Naive thymus-derived CD4-positive, alpha-beta T cell (primary cell): ENCODE measurements at regions of chr1 and their contacts with region 1.

Region 1: GRCh38 chr1:61588736-61589672 is 135.9 kb downstream of the TM2D1 start:
- DNase-seq: peak in 8 of 9 donors; percentile 7 to 53 (median 46)
- ATAC-seq: peak; percentile 74
- H3K4me3 ChIP-seq: no peak overlapping the region
- H3K4me3 Mint-ChIP-seq: no peak overlapping the region
- H3K27ac ChIP-seq: no peak overlapping the region
- H3K27ac Mint-ChIP-seq: no peak overlapping the region
- H3K4me1 ChIP-seq: no peaks in the 10 kb centered on the region
- H3K4me1 Mint-ChIP-seq: peaks cover 0 to 3% (median 0%) of the 10 kb centered on the region in 7 donors
- H3K27me3 ChIP-seq: no peaks in the 10 kb centered on the region
- H3K27me3 Mint-ChIP-seq: peaks cover 0 to 10% (median 8%) of the 10 kb centered on the region in 5 donors

Region 2: DNA sequence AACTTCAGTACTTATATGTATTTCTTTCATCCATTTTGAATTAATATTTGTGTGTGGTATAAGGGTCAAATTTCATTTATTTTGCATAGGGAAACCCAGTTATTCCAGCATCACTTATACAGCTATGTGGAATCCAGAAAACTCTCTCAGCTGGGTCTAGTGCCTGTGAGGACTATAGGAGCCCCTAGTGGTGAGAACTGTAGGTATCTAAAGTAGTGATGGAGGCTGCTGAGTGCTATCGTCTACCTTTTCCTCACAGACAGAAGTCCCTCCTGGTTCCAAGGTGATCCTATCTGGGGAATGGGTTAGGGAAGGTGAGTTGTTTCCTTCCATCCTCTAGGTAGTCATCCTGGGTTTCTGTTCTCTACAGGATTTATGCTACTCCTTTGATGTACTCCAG is 1163.5 kb before region 1 on chr1:
- CTCF ChIA-PET with region 1: no interaction called
- POLR2A ChIA-PET with region 1: no interaction called
- intact Hi-C with region 1: no loop called
- DNase-seq: no peak
- ATAC-seq: no peak
- H3K4me3 ChIP-seq: no peak overlapping the region
- H3K4me3 Mint-ChIP-seq: no peak overlapping the region
- H3K27ac ChIP-seq: no peak overlapping the region
- H3K27ac Mint-ChIP-seq: no peak overlapping the region
- H3K4me1 ChIP-seq: no peaks in the 10 kb centered on the region
- H3K4me1 Mint-ChIP-seq: no peaks in the 10 kb centered on the region
- H3K27me3 ChIP-seq: no peaks in the 10 kb centered on the region
- H3K27me3 Mint-ChIP-seq: peaks cover 0 to 4% (median 0%) of the 10 kb centered on the region in 5 donors

Region 3: GRCh38 chr1:60969971-60970509 is 619.0 kb before region 1 on chr1:
- CTCF ChIA-PET with region 1: interaction called, 4 read pairs
- POLR2A ChIA-PET with region 1: no interaction called
- intact Hi-C with region 1: loop called in 1 of 2 experiments (anchors 5 kb)
- DNase-seq: no peak
- ATAC-seq: no peak
- H3K4me3 ChIP-seq: no peak overlapping the region
- H3K4me3 Mint-ChIP-seq: no peak overlapping the region
- H3K27ac ChIP-seq: no peak overlapping the region
- H3K27ac Mint-ChIP-seq: no peak overlapping the region
- H3K4me1 ChIP-seq: no peaks in the 10 kb centered on the region
- H3K4me1 Mint-ChIP-seq: peaks cover 0 to 1% (median 0%) of the 10 kb centered on the region in 7 donors
- H3K27me3 ChIP-seq: no peaks in the 10 kb centered on the region
- H3K27me3 Mint-ChIP-seq: peaks cover 9 to 28% (median 26%) of the 10 kb centered on the region in 5 donors

Region 4: DNA sequence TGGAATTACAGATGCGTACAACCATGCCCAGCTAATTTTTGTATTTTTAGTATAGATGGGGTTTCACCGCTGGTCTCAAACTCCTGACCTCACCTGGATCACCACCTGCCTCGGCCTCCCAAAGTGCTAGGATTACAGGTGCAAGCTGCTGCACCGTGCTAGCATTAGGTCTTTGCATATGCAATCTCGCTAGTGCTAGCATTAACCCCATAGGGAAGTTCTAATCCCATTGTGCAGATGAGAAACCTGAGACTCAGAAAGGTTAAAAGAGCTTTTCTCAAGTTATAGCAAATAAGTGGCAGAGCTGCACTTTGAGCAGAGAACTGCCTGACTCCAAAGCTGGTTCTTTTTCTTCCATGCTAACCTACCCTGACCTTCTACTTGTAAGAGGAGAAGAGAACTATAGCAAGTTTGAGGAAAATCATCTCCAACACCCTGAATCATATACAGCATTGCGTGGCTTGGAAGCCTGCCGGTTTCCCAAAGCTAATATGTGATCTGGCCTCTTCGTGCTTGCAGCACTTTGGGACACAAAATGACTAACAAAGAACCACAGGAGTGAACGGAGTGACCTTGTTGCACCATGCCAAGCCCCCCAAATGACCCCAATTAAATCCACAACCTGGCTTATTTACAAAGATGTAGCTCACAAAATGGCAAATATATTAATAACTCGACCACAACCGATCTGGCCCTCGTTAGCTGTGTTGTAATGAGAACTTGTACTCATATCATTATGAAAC is 49.1 kb before region 1 on chr1:
- CTCF ChIA-PET with region 1: no interaction called
- POLR2A ChIA-PET with region 1: no interaction called
- intact Hi-C with region 1: no loop called
- DNase-seq: no peak
- ATAC-seq: no peak
- H3K4me3 ChIP-seq: no peak overlapping the region
- H3K4me3 Mint-ChIP-seq: no peak overlapping the region
- H3K27ac ChIP-seq: no peak overlapping the region
- H3K27ac Mint-ChIP-seq: no peak overlapping the region
- H3K4me1 ChIP-seq: no peaks in the 10 kb centered on the region
- H3K4me1 Mint-ChIP-seq: peaks cover 2 to 33% (median 4%) of the 10 kb centered on the region in 7 donors
- H3K27me3 ChIP-seq: no peaks in the 10 kb centered on the region
- H3K27me3 Mint-ChIP-seq: peaks cover 0 to 21% (median 0%) of the 10 kb centered on the region in 5 donors

Region 5: DNA sequence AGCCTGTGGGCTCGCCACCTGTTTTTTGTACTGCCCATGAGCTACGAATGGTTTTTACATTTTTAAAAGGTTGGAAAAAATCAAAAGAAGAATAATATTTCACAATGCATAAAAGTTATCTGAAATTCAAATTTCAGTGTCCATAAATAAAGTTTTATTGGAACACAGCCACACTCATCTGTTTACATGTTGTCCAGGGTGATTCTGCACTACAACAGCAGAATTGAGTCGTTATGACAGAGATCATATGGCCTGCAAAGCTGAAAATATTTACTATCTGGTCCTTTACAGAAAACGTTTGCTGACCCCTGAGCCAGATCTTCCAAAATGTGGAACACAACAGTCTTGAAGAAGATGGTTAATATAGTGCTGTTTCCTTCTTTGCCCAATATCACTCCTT is 46.6 kb after region 1 on chr1:
- CTCF ChIA-PET with region 1: no interaction called
- POLR2A ChIA-PET with region 1: no interaction called
- intact Hi-C with region 1: no loop called
- DNase-seq: no peak
- ATAC-seq: no peak
- H3K4me3 ChIP-seq: no peak overlapping the region
- H3K4me3 Mint-ChIP-seq: no peak overlapping the region
- H3K27ac ChIP-seq: no peak overlapping the region
- H3K27ac Mint-ChIP-seq: no peak overlapping the region
- H3K4me1 ChIP-seq: no peaks in the 10 kb centered on the region
- H3K4me1 Mint-ChIP-seq: peaks cover 0 to 6% (median 4%) of the 10 kb centered on the region in 7 donors
- H3K27me3 ChIP-seq: no peaks in the 10 kb centered on the region
- H3K27me3 Mint-ChIP-seq: peaks cover 0 to 22% (median 5%) of the 10 kb centered on the region in 5 donors

Region 6: DNA sequence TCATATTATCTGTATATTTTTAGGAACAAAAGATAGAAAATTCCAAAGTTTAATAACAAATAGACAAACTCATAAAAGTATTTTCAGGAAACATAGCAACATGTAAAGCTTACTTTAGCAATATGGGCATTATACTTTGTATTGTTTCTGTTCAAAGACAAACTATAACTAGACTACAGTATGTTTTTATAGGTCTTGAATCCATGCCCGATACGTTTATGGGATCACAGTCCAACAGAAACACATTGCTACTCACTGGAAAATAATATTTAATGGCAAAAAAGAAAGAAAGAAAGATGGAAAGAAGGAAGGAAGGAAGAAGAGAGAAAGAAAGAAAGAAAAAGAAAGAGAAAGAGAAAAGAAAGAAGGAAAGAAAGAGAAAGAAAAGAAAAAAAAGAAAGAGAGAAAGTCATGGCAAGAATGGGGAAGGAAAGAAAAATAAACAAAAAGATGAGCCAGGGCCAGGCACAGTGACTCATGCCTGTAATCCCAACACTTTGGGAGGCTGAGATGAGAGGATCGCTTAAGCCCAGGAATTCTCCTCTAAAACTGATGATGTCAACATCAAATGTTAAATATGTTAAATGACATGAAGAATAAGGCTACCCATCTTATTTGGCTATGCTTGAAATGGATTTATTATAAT is 103.3 kb after region 1 on chr1:
- CTCF ChIA-PET with region 1: no interaction called
- POLR2A ChIA-PET with region 1: no interaction called
- intact Hi-C with region 1: no loop called
- DNase-seq: no peak
- ATAC-seq: no peak
- H3K4me3 ChIP-seq: no peak overlapping the region
- H3K4me3 Mint-ChIP-seq: no peak overlapping the region
- H3K27ac ChIP-seq: no peak overlapping the region
- H3K27ac Mint-ChIP-seq: peak overlapping the region in 4 of 9 donors; percentile 4 to 60 (median 27)
- H3K4me1 ChIP-seq: no peaks in the 10 kb centered on the region
- H3K4me1 Mint-ChIP-seq: peaks cover 0 to 11% (median 0%) of the 10 kb centered on the region in 7 donors
- H3K27me3 ChIP-seq: no peaks in the 10 kb centered on the region
- H3K27me3 Mint-ChIP-seq: no peaks in the 10 kb centered on the region